Calu3 (cell line): ENCODE measurements at regions of chr1 and their contacts with region 1.

Region 1: GRCh38 chr1:62783723-62784508 is at the start of gene ATG4C:
- DNase-seq: peak; percentile 92
- H3K4me3 Mint-ChIP-seq: no peak within 1 kb of the TSS
- H3K27ac Mint-ChIP-seq: no peak within 1 kb of the TSS
- H3K4me1 Mint-ChIP-seq: peaks cover 13% of the 10 kb centered on the region
- H3K27me3 Mint-ChIP-seq: peaks cover 15% of the 10 kb centered on the region
- CTCF ChIP-seq: no peak
- total RNA-seq, gene ATG4C: 9.1 and 12.4 TPM in 2 replicates

Region 2: GRCh38 chr1:62154687-62155086 is 629.2 kb before region 1 on chr1:
- CTCF ChIA-PET with region 1: no interaction called
- intact Hi-C with region 1: no loop called
- DNase-seq: no peak
- H3K4me3 Mint-ChIP-seq: no peak overlapping the region
- H3K27ac Mint-ChIP-seq: no peak overlapping the region
- H3K4me1 Mint-ChIP-seq: no peaks in the 10 kb centered on the region
- H3K27me3 Mint-ChIP-seq: no peaks in the 10 kb centered on the region
- CTCF ChIP-seq: no peak

Region 3: GRCh38 chr1:62735491-62736171 is 48.3 kb before region 1 on chr1:
- CTCF ChIA-PET with region 1: no interaction called
- intact Hi-C with region 1: no loop called
- DNase-seq: no peak
- H3K4me3 Mint-ChIP-seq: no peak overlapping the region
- H3K27ac Mint-ChIP-seq: no peak overlapping the region
- H3K4me1 Mint-ChIP-seq: peaks cover 24% of the 10 kb centered on the region
- H3K27me3 Mint-ChIP-seq: no peaks in the 10 kb centered on the region
- CTCF ChIP-seq: no peak

Region 4: DNA sequence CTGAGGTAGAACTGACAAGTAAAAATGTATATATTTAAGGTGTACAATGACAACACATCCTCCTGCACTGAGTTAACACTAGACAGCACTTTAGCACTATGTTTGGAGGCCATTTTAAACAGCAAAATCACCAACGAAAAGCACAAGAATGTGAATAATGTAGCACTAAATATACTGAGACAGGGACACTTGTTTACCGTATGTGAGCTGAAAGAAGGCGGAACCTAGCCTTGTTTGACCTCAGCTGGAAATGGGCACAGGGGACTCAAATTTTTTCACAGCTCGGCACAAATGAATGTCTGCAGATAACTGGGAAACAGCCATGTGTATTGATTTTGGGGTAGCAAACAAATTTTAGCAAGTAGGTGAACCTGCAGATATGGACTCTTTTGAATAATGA is 17.9 kb before region 1 on chr1:
- CTCF ChIA-PET with region 1: no interaction called
- intact Hi-C with region 1: loop called (anchors 2 kb)
- DNase-seq: no peak
- H3K4me3 Mint-ChIP-seq: no peak overlapping the region
- H3K27ac Mint-ChIP-seq: no peak overlapping the region
- H3K4me1 Mint-ChIP-seq: peaks cover 2% of the 10 kb centered on the region
- H3K27me3 Mint-ChIP-seq: no peaks in the 10 kb centered on the region
- CTCF ChIP-seq: no peak